Right cardiac atrium (tissue), 5 donors: ENCODE measurements at regions of chr6 and their contacts with region 1.

Region 1: DNA sequence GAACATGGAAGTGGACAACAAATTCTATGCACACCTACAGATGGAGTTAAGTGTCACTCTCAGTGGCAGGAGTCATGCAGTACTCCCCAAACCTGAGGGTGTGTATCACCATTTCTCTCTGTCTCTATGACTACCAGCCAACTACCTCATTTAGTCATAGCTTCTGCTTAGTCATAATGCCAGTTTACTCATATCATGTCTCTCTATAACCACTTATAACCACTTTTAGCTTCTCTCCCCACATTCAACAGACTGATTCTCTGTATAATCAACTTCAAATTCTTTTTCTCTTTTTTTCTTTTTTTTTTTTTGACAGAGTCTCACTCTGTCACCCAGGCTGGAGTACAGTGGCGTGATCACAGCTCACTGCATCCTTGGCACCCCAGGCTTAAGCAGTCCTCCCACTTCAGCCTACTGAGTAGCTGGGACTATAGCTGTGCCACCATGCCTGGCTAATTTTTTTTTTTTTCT is 13.8 kb upstream of the GTF3C6 start:
- DNase-seq: no peak
- ATAC-seq: peak in 1 of 2 donors; percentile 59
- H3K4me3 ChIP-seq: no peak overlapping the region
- H3K27ac ChIP-seq: no peak overlapping the region
- H3K4me1 ChIP-seq: no peaks in the 10 kb centered on the region
- H3K27me3 ChIP-seq: no peaks in the 10 kb centered on the region

Region 2: GRCh38 chr6:110688661-110689268 is 256.0 kb before region 1 on chr6:
- intact Hi-C with region 1: loop called in 3 of 4 experiments (anchors 5 kb)
- DNase-seq: no peak
- ATAC-seq: no peak
- H3K4me3 ChIP-seq: no peak overlapping the region
- H3K27ac ChIP-seq: no peak overlapping the region
- H3K4me1 ChIP-seq: peaks cover 5% of the 10 kb centered on the region
- H3K27me3 ChIP-seq: no peaks in the 10 kb centered on the region

Region 3: DNA sequence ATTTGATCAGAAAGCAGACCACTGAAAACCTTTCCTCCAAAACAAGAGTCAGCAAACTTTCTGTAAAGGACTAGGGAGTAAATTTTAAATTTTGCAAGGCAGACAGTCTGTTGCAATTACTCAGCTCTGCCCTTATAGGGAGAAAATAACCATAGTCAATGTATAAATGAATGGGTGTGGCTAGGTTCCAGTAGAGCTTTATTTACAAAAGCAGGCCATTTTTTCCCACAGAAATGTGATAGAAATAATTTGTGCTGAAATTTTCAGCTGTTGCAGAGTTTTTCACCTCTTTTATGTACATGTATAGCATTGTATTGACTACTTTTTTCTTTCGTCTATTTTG is 62.5 kb before region 1 on chr6:
- intact Hi-C with region 1: loop called in 1 of 4 experiments (anchors 10 kb)
- DNase-seq: no peak
- ATAC-seq: peak in 1 of 2 donors; percentile 6
- H3K4me3 ChIP-seq: no peak overlapping the region
- H3K27ac ChIP-seq: no peak overlapping the region
- H3K4me1 ChIP-seq: peaks cover 10% of the 10 kb centered on the region
- H3K27me3 ChIP-seq: no peaks in the 10 kb centered on the region

Region 4: DNA sequence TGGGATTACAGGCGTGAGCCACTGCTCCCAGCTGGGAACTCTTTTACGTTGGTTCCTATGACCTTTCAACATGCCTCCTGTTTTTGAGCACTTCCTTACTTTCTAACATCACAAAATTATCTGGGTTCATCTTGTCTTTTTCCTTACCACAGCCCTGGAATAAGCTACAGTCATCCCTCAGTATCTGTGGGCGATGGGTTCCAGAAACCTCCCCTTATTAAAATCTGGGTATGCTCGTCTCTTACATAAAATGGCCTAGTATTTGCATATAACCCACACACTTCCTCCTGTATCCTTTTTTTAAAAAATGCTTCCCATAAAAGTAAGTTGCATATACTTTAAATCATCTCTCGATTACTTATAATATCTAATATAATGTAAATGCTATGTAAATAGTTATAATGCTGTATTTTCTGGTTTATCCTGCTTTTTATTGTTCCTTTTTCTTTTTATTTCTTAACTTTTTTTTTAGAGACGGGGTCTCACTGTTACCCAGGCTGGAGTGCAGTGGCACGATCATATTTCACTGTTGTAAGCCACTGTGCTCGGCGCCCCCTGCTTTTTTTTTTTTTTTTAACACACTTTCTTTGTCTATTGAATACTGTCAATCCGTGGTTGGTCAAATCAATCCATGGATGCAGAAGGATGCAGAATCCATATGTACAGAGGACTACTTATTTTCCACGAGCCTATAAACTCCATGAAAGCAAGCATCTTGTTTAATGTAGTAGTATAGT is 46.3 kb after region 1 on chr6:
- intact Hi-C with region 1: no loop called
- DNase-seq: no peak
- ATAC-seq: no peak
- H3K4me3 ChIP-seq: no peak overlapping the region
- H3K27ac ChIP-seq: no peak overlapping the region
- H3K4me1 ChIP-seq: no peaks in the 10 kb centered on the region
- H3K27me3 ChIP-seq: no peaks in the 10 kb centered on the region

Region 5: DNA sequence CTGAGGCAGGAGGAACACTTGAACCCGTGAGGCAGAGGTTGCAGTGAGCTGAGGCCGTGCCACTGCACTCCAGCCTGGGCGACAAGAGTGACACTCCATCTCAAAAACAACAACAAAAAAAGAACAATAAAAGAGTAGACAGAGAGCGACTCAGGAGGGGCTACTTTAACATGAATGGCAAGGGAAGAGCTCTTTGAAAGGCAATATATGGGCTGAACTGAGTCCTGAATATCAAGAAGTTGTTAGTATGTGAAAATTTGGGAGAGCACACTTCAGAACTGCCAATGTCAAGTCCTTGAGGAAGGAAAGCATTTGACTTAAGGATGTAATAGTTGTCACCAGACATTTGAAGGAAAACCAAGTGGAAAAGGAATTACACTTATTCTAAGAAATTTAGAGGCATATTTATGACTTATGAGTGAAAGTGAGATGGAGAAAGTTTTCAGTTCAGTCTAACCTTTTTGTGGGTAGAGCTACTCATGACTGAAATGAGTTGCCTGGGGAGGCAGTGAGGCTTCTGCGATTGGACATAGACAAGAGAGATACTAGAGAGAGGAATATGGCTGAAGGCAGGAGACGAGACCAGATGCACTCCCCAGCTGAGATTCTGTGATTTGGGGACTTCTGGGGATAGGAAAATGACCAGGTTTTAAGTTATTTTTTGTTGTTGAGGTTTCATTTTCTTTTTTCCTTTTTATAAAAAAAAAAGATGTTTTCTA is 94.0 kb after region 1 on chr6:
- intact Hi-C with region 1: no loop called
- DNase-seq: no peak
- ATAC-seq: no peak
- H3K4me3 ChIP-seq: no peak overlapping the region
- H3K27ac ChIP-seq: no peak overlapping the region
- H3K4me1 ChIP-seq: no peaks in the 10 kb centered on the region
- H3K27me3 ChIP-seq: no peaks in the 10 kb centered on the region

Region 6: GRCh38 chr6:111080713-111081112 is 136.0 kb after region 1 on chr6:
- intact Hi-C with region 1: no loop called
- DNase-seq: no peak
- ATAC-seq: no peak
- H3K4me3 ChIP-seq: no peak overlapping the region
- H3K27ac ChIP-seq: no peak overlapping the region
- H3K4me1 ChIP-seq: peaks cover 1% of the 10 kb centered on the region
- H3K27me3 ChIP-seq: no peaks in the 10 kb centered on the region